ENCODE measurements at regions of chr19 and their contacts with region 1.

Region 1: DNA sequence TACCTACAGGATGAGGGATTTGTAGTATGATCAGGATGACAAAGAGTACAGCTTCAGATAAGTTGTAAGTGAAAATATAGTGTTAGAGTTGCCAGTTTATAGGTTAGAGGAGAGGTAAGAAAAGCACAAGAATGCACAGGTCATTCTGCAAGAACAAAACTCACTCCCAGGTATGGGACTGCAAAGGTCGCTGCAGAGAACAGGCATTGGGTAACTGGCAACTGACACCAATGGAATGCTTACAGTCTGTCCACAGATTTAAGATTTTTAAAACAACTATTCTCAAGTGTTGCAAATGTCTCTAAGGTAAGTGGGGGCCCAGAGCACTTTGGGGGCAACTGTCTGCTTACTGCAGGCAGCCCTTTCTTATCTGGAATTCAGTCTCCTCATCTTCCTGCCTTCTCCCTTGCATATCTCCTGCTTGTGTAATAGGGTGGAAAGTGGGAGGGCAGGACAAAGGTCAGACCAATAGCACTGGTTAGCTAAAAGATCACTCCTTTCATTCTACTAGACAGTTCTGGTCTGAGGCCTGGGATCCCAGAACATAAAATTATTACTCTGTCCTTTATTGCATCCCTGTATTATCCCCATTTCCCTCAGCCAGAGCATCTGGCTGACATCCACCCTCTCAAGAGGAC is 42.3 kb upstream of the ZNF726 start:
- DNase-seq: no peak
- H3K4me3 ChIP-seq: no peak overlapping the region
- H3K27ac ChIP-seq: no peak overlapping the region
- H3K4me1 ChIP-seq: no peaks in the 10 kb centered on the region
- H3K27me3 ChIP-seq: peaks cover 0 to 5% (median 0%) of the 10 kb centered on the region in 3 donors
- CTCF ChIP-seq: no peak
- EP300 ChIP-seq: no peak
- POLR2A ChIP-seq: no peak

Region 2: DNA sequence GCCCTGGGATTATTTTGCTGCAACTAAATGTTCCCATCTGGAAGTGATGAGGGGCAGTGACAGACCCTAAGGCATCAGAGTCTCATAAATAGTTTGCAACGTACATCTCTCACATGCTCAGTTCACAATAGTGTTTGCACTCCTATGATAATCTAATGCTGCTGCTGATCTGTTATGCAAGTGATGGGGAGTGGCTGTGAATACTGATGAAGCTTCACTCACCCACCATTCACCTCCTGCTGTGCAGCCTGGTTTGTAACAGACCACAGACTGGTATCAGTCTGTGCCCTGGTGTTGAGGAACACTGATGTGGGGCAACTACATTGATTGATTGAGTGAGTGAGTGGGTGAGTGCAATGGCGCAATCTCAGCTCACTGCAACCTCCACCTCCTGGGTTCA is 97.2 kb after region 1 on chr19:
- intact Hi-C with region 1: loop called (anchors 5 kb)
- DNase-seq: no peak
- H3K4me3 ChIP-seq: no peak overlapping the region
- H3K27ac ChIP-seq: no peak overlapping the region
- H3K4me1 ChIP-seq: no peaks in the 10 kb centered on the region
- H3K27me3 ChIP-seq: peaks cover 7 to 32% (median 11%) of the 10 kb centered on the region in 3 donors
- CTCF ChIP-seq: no peak
- EP300 ChIP-seq: no peak
- POLR2A ChIP-seq: no peak

Measured in sigmoid colon (tissue), 7 donors.